ENCODE measurements at regions of chr1 and their contacts with region 1.

Region 1: GRCh38 chr1:52127181-52128180 is 14.4 kb upstream of the ZFYVE9 start:
- DNase-seq: peak in 2 of 10 donors; percentile 23 to 31

Region 2: DNA sequence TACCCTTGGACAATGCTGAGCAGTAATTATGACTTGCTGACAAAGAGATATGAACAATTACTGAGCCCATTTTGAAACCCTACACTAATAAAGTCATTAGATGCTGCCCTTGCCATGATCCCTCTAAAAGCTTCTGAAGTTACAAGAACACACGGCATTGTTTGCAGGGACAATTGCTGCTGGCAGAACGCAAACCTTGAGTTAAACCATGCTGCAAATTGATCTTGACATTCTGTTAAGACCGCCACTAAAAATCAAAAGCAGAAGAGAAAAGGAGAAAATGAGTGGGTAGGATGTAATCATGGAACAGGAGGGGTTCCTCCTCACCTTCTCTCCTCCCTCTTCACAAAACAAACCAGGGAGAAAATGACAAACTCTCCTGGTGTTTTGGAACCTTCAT is 1568.1 kb before region 1 on chr1:
- intact Hi-C with region 1: no loop called
- DNase-seq: no peak

Region 3: DNA sequence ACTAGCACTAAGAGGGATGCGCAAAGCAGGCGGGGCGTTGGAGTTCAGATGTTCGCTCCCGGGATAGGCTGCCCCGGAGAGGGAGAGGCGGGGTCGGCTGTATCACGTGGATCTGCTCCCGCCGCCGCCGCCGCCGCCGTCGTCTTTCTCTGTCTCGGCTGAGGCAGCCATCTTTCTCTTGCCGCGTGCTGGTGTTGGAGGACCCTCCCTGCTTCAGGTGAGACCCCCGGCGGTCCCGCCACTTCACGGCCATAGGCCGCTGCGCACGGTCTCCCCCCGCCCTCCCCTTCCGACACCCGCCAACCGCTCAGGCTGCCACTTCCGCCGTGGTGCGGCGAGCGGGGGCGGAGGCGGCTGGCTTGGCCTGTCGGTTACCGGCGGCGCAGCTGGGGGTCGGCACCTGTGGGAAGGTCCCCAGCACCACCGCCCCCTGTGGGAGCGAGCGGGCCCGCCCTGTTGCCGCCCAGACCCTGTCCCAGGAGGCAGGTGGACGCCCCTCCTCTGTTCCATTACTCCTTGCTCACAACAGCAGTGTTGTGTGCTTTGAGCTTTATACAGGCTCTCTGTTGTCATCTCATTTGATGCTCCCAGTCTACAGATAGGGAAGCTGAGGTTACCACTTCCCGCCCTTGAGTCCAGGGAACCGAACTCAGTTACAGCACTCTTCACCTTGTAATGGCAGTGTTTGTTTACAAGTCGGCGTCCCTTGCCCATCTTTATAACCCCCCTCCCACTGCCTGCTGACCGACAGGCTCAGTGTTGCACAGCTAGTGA is 71.1 kb before region 1 on chr1 and contains the start of gene BTF3L4:
- intact Hi-C with region 1: no loop called
- DNase-seq: peak; percentile 94 to 100 (median 98)

Region 4: DNA sequence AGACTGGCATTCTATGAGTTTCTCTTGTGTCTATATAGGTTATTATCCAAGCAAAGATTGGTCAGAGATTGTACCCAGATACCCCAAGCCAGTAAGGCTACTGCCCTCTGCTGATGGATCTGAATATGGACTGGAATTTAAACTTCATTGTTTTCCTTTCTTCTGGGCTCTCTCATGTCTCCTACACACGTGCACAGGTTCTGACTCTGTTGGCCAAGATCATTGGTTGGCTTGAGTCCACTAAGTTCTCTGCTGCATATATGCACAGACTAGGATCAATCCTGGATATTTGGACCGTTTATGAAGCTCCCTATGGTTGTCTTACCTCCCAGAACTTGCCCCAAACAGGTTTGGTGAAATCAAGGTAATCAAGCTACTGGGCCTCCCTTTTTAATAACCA is 168.9 kb after region 1 on chr1:
- intact Hi-C with region 1: loop called (anchors 5 kb)
- DNase-seq: no peak